T-cell (primary cell): ENCODE measurements at regions of chr3 and their contacts with region 1.

Region 1: GRCh38 chr3:100289339-100289738 is 28.5 kb downstream of the TBC1D23 start:
- DNase-seq: no peak
- ATAC-seq: no peak
- H3K4me3 ChIP-seq: no peak overlapping the region
- H3K4me3 Mint-ChIP-seq: no peak overlapping the region
- H3K27ac ChIP-seq: no peak overlapping the region
- H3K27ac Mint-ChIP-seq: no peak overlapping the region
- H3K4me1 ChIP-seq: no peaks in the 10 kb centered on the region
- H3K4me1 Mint-ChIP-seq: no peaks in the 10 kb centered on the region
- H3K27me3 ChIP-seq: no peaks in the 10 kb centered on the region
- H3K27me3 Mint-ChIP-seq: no peaks in the 10 kb centered on the region

Region 2: DNA sequence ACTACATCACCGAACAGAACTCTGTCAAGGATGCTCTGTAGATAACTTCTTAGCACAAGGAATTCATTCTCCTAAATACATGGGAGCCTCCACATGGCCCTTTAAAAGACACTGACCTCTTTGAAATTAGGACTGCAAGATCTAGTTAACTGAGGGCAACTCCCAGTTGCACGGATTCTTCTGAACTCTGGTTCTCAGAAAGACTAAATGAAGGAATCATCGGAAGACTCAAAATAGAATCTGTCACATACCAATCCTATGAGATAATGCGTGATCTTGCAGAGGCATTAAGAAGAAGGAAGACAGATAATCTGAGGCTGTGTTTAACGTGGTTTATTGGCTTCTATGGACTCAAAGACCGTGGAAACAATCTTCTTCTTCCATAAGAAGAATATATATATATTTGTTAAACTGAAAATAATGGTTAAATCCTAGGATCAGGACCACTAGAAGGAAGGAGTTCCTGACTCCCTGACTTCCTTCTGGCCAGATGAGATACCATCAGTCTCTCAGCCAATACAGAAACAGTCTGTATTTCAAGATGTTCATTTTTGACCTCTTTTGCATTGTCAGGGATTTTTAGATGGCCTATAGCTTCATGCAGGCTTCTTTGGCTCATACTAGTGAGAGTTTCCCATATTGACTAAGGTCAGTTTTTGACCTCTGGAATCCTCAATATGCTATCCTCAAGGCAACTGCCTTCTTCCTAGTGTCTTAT is 62.5 kb before region 1 on chr3:
- CTCF ChIA-PET with region 1: no interaction called
- POLR2A ChIA-PET with region 1: no interaction called
- DNase-seq: no peak
- ATAC-seq: no peak
- H3K4me3 ChIP-seq: no peak overlapping the region
- H3K4me3 Mint-ChIP-seq: no peak overlapping the region
- H3K27ac ChIP-seq: no peak overlapping the region
- H3K27ac Mint-ChIP-seq: no peak overlapping the region
- H3K4me1 ChIP-seq: no peaks in the 10 kb centered on the region
- H3K4me1 Mint-ChIP-seq: peaks cover 0 to 8% (median 5%) of the 10 kb centered on the region in 3 donors
- H3K27me3 ChIP-seq: no peaks in the 10 kb centered on the region
- H3K27me3 Mint-ChIP-seq: peaks cover 0 to 5% of the 10 kb centered on the region in 2 donors

Region 3: GRCh38 chr3:100400780-100401673 is 111.7 kb after region 1 on chr3 and contains the starts of genes LNP1 and TOMM70:
- CTCF ChIA-PET with region 1: interaction called in 1 of 2 experiments, 11 read pairs
- POLR2A ChIA-PET with region 1: interaction called in 1 of 2 experiments, 3 read pairs
- DNase-seq: peak; percentile 84 to 96 (median 93)
- ATAC-seq: peak; percentile 88 to 93 (median 91)
- H3K4me3 ChIP-seq: peak within 1 kb of the TSS; percentile 77 to 99
- H3K4me3 Mint-ChIP-seq: peak within 1 kb of the TSS; percentile 93 to 98 (median 94)
- H3K27ac ChIP-seq: peak within 1 kb of the TSS; percentile 87
- H3K27ac Mint-ChIP-seq: peak within 1 kb of the TSS; percentile 93 to 96
- H3K4me1 ChIP-seq: peaks cover 20 to 28% of the 10 kb centered on the region in 2 experiments
- H3K4me1 Mint-ChIP-seq: peaks cover 70 to 81% (median 72%) of the 10 kb centered on the region in 3 donors
- H3K27me3 ChIP-seq: no peaks in the 10 kb centered on the region
- H3K27me3 Mint-ChIP-seq: no peaks in the 10 kb centered on the region
- total RNA-seq, gene LNP1: 0.88 to 1.7 (median 1.4) TPM
- total RNA-seq, gene TOMM70: 23.5 to 33.9 (median 33.6) TPM

Region 4: GRCh38 chr3:100482176-100482575 is 192.8 kb after region 1 on chr3:
- CTCF ChIA-PET with region 1: no interaction called
- POLR2A ChIA-PET with region 1: no interaction called
- DNase-seq: no peak
- ATAC-seq: no peak
- H3K4me3 ChIP-seq: no peak overlapping the region
- H3K4me3 Mint-ChIP-seq: no peak overlapping the region
- H3K27ac ChIP-seq: no peak overlapping the region
- H3K27ac Mint-ChIP-seq: no peak overlapping the region
- H3K4me1 ChIP-seq: no peaks in the 10 kb centered on the region
- H3K4me1 Mint-ChIP-seq: peaks cover 0 to 4% (median 0%) of the 10 kb centered on the region in 3 donors
- H3K27me3 ChIP-seq: no peaks in the 10 kb centered on the region
- H3K27me3 Mint-ChIP-seq: peaks cover 17 to 24% of the 10 kb centered on the region in 2 donors

Region 5: GRCh38 chr3:100754563-100755334 is 465.4 kb after region 1 on chr3:
- CTCF ChIA-PET with region 1: no interaction called
- POLR2A ChIA-PET with region 1: interaction called in 1 of 2 experiments, 10 read pairs
- DNase-seq: no peak
- ATAC-seq: no peak
- H3K4me3 ChIP-seq: no peak overlapping the region
- H3K4me3 Mint-ChIP-seq: no peak overlapping the region
- H3K27ac ChIP-seq: no peak overlapping the region
- H3K27ac Mint-ChIP-seq: no peak overlapping the region
- H3K4me1 ChIP-seq: no peaks in the 10 kb centered on the region
- H3K4me1 Mint-ChIP-seq: no peaks in the 10 kb centered on the region
- H3K27me3 ChIP-seq: no peaks in the 10 kb centered on the region
- H3K27me3 Mint-ChIP-seq: no peaks in the 10 kb centered on the region